Cardiac septum (tissue), 1 donor: ENCODE measurements at regions of chr3 and their contacts with region 1.

Region 1: DNA sequence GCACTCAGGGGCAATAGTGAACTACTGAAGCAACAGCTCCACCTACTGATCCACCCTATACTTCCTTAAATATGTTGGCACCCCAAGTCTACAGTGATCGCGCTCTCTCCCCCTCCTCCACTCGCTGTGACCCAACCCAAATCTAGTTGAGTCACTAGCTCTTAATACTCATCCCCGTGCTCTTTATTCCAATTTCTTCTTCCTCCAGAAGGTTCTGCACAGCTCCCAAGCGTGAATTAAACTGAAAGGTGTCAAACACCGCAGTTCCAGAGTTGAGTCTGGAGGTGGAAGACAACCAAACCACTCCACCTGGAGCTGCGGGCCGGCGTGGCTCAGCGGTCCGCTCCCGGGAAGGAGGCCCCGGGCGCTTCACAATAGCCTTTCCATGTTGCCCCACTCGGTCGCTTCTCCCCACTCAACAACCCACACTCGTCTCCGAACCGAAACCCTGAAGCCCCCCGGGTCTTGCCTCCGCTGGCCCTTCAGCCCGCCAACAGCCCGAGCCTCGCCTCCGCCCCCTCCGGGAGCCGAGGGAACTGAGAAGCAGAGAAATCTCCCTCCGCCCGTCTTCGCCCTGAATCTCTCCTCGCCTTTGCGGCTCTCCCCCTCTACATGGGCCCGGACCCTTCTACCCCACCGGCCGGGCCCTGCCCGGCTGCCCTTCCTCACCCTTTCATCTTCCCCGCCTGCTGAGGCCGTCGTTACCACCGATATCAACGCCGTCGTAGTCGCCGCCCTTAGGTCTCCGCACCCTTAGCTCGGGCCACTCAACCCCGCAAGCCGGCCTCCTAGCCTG is 578 bp downstream of the NAA50 start:
- DNase-seq: peak; percentile 80

Region 2: GRCh38 chr3:113514265-113514769 is 231.2 kb before region 1 on chr3:
- intact Hi-C with region 1: loop called (anchors 10 kb)
- DNase-seq: no peak

Region 3: DNA sequence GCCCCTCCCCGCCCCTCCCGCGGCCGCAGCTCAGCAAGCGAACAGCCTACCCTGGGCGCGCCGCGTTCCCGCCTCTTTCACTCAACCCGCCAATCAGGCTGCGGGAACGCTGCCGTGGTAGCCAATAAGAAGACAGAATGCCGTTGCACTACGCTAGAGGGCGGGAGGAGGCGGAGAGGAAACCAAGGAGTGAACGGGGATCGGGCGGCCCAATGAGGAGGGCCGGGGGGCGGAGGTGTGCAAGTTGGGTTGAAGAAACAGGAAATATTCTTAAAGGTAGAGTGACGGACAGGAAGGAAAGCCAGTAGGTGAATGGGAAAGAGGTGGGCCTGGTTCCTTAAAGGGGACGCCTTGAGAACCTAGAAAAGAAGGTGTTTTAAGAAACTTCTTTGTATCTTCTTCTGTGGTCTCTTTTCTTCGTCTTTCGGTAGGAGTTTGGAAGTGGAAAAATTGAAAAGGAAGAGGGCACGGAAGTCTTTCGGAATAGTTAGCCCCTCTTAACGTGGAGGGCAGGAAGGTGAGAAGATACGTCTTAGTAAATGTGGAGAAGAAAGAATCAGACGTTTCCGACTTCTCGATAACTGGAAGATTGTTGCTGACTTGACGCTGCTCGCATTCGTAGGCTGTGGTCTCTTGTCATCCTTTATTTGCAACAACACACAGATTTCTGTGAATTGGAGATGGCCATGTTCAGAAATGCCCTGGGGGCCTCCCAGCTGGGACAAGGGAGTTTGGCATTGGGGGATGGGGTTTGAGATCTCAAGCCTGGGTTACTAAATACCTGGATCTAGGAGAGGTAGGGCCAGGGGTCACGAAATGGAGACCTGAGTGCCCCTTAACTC is 48.6 kb before region 1 on chr3:
- intact Hi-C with region 1: loop called (anchors 1 kb)
- DNase-seq: peak; percentile 99

Region 4: DNA sequence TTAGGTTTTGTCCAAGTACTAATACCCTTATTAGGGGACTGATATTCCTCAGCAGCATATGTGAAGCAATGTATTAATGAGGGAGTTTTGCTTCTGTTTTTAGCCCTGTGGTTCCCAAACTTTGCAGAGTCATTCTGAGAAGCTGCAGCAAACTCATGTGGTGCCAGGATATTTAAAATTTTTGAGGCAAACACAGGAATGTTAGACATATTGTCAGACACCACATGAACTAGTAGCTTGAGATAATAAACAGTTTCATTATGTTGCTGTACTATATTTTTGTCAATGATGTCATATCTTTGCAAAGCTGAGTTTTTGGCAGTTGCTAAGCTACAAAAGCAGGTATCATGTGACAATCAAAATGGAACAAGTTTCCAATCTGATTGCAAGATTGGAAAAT is 38.0 kb after region 1 on chr3:
- intact Hi-C with region 1: loop called (anchors 5 kb)
- DNase-seq: no peak

Region 5: GRCh38 chr3:113838631-113839209 is 93.2 kb after region 1 on chr3 and contains the start of gene GRAMD1C:
- intact Hi-C with region 1: loop called (anchors 2 kb)
- DNase-seq: peak; percentile 95
- total RNA-seq, gene GRAMD1C: 0.70 TPM

Region 6: GRCh38 chr3:114056130-114057010 is 310.9 kb after region 1 on chr3 and contains the starts of genes CCDC191 and QTRT2:
- intact Hi-C with region 1: loop called (anchors 5 kb)
- DNase-seq: peak; percentile 100
- total RNA-seq, gene CCDC191: 1.2 TPM
- total RNA-seq, gene QTRT2: 6.5 TPM